ENCODE measurements at regions of chr6 and their contacts with region 1.

Region 1: GRCh38 chr6:155256122-155256795 is 7.6 kb upstream of the CLDN20 start:
- DNase-seq: no peak
- H3K4me3 ChIP-seq: no peak overlapping the region
- H3K27ac ChIP-seq: no peak overlapping the region
- H3K4me1 ChIP-seq: no peaks in the 10 kb centered on the region
- H3K27me3 ChIP-seq: no peaks in the 10 kb centered on the region
- CTCF ChIP-seq: no peak

Region 2: DNA sequence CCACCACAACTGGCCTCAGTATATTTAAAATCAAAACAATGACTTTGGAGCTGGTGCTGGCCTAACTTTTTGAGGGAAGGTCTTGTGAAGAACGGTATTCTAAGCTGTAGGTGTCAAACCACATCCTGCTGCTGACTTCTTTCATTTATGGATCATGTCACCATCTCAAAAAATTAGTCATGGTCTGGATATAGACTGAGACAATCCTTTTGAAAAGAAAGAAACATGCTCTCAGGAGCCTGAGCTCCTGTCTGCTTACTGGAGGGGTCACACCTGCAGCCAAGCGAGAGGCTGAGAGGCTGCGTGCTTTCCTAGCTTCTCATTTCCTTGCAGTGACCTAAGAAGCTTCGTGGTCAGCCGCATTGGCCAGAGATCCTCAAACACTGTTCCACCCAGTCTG is 205.9 kb before region 1 on chr6:
- dilution Hi-C with region 1: no loop called
- DNase-seq: no peak
- H3K4me3 ChIP-seq: no peak overlapping the region
- H3K27ac ChIP-seq: no peak overlapping the region
- H3K4me1 ChIP-seq: no peaks in the 10 kb centered on the region
- H3K27me3 ChIP-seq: no peaks in the 10 kb centered on the region
- CTCF ChIP-seq: no peak

Region 3: DNA sequence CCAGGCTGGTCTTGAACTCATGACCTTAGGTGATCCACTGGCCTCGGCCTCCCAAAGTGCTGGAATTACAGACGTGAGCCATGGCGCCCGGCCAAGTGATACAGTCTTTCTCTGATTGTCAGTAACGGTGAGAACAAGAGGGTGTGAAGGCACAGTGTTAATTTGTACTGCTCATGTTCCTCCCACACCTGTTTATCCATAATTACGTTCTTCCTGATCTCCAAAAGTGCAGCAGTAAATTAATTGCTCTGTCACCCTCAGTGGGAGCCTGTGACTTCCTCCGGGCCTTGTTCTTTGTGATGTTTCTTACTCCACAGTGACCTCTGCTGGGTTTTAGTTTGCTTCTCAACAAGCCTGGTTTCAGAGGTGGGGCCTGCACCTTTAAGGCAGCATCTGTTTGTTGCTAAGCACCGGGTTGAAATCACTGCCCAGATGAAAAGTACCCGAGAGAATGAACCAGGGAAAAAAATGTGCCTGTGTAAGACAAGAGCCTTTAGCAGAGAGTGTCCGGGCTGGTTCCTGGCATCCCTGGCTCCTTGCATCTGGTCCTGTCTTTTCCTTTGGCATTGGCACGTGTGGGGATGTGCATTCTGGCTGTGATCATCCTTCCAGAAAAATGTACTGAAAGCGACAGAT is 81.6 kb before region 1 on chr6:
- dilution Hi-C with region 1: loop called (anchors 5 kb)
- DNase-seq: no peak
- H3K4me3 ChIP-seq: no peak overlapping the region
- H3K27ac ChIP-seq: no peak overlapping the region
- H3K4me1 ChIP-seq: peaks cover 22% of the 10 kb centered on the region
- H3K27me3 ChIP-seq: no peaks in the 10 kb centered on the region
- CTCF ChIP-seq: peak; percentile 60 to 66 (median 66)